A673 (cell line): ENCODE measurements at regions of chr5 and their contacts with region 1.

Region 1: DNA sequence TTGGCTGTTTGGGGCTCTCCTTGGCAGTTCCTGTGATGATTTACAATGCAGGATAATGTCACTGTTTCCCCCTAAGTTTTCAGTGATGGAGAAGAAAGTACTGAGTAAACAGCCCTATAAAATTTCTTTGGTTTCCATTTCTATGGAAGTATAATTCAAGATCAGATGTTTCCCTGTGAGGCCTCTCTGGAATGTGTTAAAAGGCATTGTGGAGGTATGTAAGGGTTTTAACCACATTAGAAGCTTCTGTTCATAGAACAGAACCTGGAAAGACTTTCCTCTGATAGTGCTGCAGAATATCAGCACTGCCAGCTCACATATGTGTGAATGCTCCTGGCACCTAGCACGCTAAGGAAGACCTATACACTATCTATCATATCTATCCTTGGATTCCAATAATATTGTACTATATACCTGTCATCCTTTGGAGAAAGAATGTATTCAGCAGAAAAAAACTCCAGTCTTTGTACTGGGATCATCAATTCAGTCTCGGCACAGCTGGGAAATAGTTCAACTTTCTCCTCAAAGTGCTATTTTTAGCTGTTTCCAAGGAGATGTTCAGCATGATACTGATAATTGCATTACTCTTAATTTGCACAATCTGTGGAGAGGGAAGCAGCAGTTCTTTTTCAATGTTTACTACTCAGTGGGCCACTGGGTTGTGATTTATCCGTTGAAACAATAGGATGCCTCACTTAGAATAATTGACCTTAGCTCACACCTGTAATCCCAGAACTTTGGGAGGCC is 21.9 kb downstream of the TTC1 start:
- DNase-seq: peak; percentile 29
- H3K4me3 ChIP-seq: no peak overlapping the region
- H3K27ac ChIP-seq: peak overlapping the region; percentile 53
- H3K4me1 ChIP-seq: peaks cover 17% of the 10 kb centered on the region
- H3K27me3 ChIP-seq: no peaks in the 10 kb centered on the region
- CTCF ChIP-seq: no peak

Region 2: GRCh38 chr5:160064417-160064810 is 33.6 kb after region 1 on chr5:
- CTCF ChIA-PET with region 1: no interaction called
- POLR2A ChIA-PET with region 1: interaction called, 10 read pairs
- intact Hi-C with region 1: no loop called
- DNase-seq: no peak
- H3K4me3 ChIP-seq: no peak overlapping the region
- H3K27ac ChIP-seq: no peak overlapping the region
- H3K4me1 ChIP-seq: peaks cover 14% of the 10 kb centered on the region
- H3K27me3 ChIP-seq: no peaks in the 10 kb centered on the region
- CTCF ChIP-seq: no peak

Region 3: DNA sequence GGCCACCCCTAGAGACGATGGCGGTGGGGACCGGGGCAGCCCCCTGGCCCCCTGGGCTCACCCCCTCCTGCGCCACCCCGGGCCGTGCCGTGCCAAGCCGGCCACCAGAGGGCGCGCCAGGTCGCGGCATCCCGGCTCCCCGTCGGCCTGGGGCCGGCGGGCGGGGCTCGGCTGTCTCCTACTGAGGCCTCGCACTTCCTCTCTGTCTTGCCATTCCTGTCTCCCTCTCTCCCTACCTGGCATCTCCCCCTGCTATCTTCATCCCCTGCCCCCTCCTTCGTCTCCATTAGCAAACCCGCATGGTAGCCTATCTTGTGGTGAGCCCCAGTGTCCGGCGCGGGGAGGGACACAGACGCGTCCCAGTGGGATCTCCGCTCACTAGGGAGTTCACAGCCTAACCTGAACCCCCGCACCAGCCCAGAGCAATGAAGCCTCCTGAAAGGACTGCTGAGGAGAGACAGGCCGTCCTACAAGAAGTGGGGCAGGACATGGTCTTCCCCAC is 168.7 kb after region 1 on chr5:
- CTCF ChIA-PET with region 1: no interaction called
- POLR2A ChIA-PET with region 1: no interaction called
- intact Hi-C with region 1: loop called (anchors 5 kb)
- DNase-seq: peak; percentile 65
- H3K4me3 ChIP-seq: no peak overlapping the region
- H3K27ac ChIP-seq: peak overlapping the region; percentile 82
- H3K4me1 ChIP-seq: peaks cover 31% of the 10 kb centered on the region
- H3K27me3 ChIP-seq: no peaks in the 10 kb centered on the region
- CTCF ChIP-seq: peak; percentile 67